Activated CD4-positive, alpha-beta memory T cell treated with anti-CD3 and anti-CD28 coated beads for 36 hours (primary cell): ENCODE measurements at regions of chr17 and their contacts with region 1.

Region 1: DNA sequence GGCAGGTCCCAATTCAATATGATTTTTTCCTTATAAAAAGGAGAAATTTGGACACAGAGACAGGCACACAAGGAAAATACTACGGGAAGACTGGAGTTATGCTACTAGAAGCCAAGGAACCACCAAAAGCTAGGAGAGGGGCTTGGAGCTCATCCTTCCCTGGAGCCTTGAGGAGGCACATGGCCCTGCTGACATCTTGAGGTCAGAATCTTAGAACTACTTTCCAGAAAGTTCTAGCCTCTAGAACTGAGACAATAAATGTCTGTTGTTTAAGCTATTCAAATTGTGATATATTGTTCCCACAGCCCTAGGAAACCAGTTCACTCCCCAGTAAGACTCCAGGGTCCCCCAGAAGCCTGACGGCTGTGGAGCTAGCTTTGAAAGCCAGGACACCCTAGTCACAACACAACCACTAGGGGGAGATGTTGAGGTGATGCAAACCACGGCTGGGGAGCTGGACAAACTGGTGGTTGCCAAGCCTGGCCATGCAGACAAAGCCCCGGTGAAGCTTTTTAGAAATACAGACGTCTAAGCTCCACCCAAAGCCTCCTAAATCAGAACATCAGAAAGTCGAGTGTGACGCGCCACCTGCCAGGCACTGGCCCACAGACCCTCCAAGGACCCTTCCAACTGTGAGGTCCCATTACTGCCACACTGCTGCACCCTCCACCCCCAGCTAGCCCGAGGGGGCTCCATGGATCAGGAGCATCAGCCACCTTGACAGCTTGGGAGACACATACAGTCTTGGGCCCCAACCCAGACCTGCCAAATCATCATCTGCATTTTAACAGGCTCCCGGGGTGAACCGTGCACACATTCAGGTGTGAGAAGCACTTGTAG is 106.4 kb downstream of the SLC39A11 start:
- DNase-seq: peak; percentile 69
- H3K4me3 Mint-ChIP-seq: no peak overlapping the region
- H3K27ac Mint-ChIP-seq: no peak overlapping the region
- H3K4me1 Mint-ChIP-seq: peaks cover 1% of the 10 kb centered on the region
- H3K27me3 Mint-ChIP-seq: no peaks in the 10 kb centered on the region

Region 2: GRCh38 chr17:72974605-72975232 is 11.4 kb before region 1 on chr17:
- CTCF ChIA-PET with region 1: interaction called, 13 read pairs
- POLR2A ChIA-PET with region 1: interaction called, 3 read pairs
- intact Hi-C with region 1: no loop called
- DNase-seq: no peak
- H3K4me3 Mint-ChIP-seq: no peak overlapping the region
- H3K27ac Mint-ChIP-seq: no peak overlapping the region
- H3K4me1 Mint-ChIP-seq: peaks cover 5% of the 10 kb centered on the region
- H3K27me3 Mint-ChIP-seq: no peaks in the 10 kb centered on the region

Region 3: GRCh38 chr17:73156166-73156840 is 170.2 kb after region 1 on chr17:
- CTCF ChIA-PET with region 1: interaction called, 41 read pairs
- POLR2A ChIA-PET with region 1: no interaction called
- intact Hi-C with region 1: loop called (anchors 1 kb)
- DNase-seq: peak; percentile 73
- H3K4me3 Mint-ChIP-seq: no peak overlapping the region
- H3K27ac Mint-ChIP-seq: no peak overlapping the region
- H3K4me1 Mint-ChIP-seq: peaks cover 19% of the 10 kb centered on the region
- H3K27me3 Mint-ChIP-seq: peaks cover 26% of the 10 kb centered on the region

Region 4: DNA sequence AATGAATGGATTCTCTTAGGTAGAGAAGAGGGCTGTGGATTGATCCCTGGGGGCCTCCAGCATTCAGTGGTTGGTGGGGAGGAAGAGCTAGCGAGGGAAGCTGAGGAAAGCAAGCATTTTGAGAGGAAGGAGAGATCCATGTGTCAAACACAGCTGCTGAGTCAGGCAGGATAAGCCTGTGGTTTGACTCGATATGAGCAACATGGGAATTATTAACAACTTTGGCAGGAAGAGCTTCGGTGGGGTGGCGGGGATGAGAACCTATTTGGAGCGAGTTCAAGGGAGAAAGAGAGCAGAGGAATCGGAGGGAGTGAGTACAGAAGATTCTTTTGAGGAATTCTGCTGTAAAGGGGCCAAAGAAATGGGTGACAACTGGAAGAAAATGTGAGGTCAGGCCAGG is 385.2 kb after region 1 on chr17:
- CTCF ChIA-PET with region 1: interaction called, 14 read pairs
- POLR2A ChIA-PET with region 1: no interaction called
- intact Hi-C with region 1: loop called (anchors 1 kb)
- DNase-seq: no peak
- H3K4me3 Mint-ChIP-seq: no peak overlapping the region
- H3K27ac Mint-ChIP-seq: no peak overlapping the region
- H3K4me1 Mint-ChIP-seq: no peaks in the 10 kb centered on the region
- H3K27me3 Mint-ChIP-seq: peaks cover 6% of the 10 kb centered on the region